ENCODE measurements at regions of chr15 and their contacts with region 1.

Region 1: GRCh38 chr15:73081321-73081958 is 29.2 kb downstream of the NEO1 start:
- DNase-seq: peak in 4 of 5 donors; percentile 40 to 51 (median 44)
- H3K4me3 ChIP-seq: no peak overlapping the region
- H3K4me3 Mint-ChIP-seq: no peak overlapping the region
- H3K27ac ChIP-seq: no peak overlapping the region
- H3K27ac Mint-ChIP-seq: no peak overlapping the region
- H3K4me1 ChIP-seq: no peaks in the 10 kb centered on the region
- H3K4me1 Mint-ChIP-seq: peaks cover 0 to 4% (median under 1%) of the 10 kb centered on the region in 4 donors
- H3K27me3 ChIP-seq: no peaks in the 10 kb centered on the region
- H3K27me3 Mint-ChIP-seq: no peaks in the 10 kb centered on the region

Region 2: DNA sequence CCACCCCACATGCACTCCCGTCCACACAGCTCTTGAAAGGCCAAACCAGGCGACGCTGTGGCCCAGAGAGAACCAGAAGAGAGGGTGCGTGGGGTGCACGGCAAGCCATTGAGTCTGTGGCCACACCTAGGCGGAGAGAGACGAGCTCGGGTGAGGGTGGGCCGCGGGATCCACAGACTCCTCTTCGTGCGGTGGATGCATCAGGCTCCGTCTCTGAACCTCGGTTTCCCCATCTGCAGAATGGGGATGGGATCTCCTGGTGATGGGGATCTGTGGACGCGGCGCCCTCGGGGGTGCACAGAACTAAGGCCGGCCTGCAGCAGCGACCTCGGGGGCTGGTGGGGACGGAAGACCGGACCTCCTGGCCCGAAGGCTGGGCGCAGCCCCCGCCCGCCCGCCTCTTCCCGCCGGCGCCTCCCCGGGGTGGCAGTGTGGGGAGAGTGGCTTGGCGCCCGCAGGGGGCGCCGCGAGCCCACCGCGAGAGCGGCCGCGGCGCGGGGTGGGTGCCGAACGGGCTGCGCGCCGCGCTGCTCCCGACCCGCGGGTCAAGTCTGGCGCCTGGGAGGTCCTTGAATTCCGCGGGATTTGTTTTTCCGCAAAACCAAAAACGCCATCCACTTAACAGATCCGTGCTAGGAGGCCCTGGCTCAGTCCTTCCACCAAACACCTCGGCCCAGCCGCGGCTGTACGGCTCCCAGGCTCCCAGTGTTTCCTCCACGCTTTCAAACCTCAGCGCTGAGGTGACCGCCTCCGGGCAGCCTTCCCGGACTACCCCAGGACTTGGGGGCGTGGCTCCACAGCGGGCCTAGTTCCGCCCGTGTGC is 284.7 kb before region 1 on chr15:
- CTCF ChIA-PET with region 1: interaction called, 24 read pairs
- POLR2A ChIA-PET with region 1: no interaction called
- intact Hi-C with region 1: loop called (anchors 1 kb)
- DNase-seq: peak in 4 of 5 donors; percentile 28 to 47 (median 36)
- H3K4me3 ChIP-seq: peak overlapping the region in 1 of 2 donors; percentile 57
- H3K4me3 Mint-ChIP-seq: peak overlapping the region; percentile 84 to 91 (median 87)
- H3K27ac ChIP-seq: no peak overlapping the region
- H3K27ac Mint-ChIP-seq: peak overlapping the region in 6 of 7 donors; percentile 43 to 87 (median 82)
- H3K4me1 ChIP-seq: peaks cover 4% of the 10 kb centered on the region
- H3K4me1 Mint-ChIP-seq: peaks cover 5 to 20% (median 7%) of the 10 kb centered on the region in 4 donors
- H3K27me3 ChIP-seq: no peaks in the 10 kb centered on the region
- H3K27me3 Mint-ChIP-seq: peaks cover 10 to 11% of the 10 kb centered on the region in 2 donors

Region 3: DNA sequence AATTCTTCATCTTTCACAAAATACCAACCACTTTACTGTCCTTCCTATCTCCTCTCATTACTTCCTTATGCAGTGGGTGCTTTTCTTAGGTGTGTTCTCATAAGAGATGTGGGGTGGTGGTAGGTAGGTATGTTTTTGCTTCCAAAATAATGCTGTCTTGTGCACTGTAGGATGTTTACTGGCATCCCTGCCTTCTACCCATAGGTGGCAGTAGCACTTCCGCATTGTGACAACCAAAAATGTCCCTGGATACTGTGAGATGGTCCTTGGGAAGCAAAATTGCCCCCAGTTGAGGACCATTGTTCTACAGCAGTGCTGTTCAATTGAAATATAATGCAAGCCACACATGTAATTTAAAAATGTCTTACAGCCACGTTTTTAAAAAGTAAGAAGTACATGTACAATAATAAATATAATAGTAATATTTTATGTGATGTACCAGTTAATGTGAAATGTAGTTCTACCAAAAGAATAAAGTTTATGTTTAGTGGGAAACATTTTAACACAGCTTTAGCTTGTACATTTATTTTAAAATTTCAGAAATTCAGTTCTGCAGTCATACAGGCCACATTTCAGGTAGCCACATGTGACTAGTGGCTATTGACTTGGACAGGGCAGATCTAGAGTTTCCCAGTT is 46.0 kb after region 1 on chr15:
- CTCF ChIA-PET with region 1: no interaction called
- POLR2A ChIA-PET with region 1: no interaction called
- intact Hi-C with region 1: no loop called
- DNase-seq: peak in 4 of 5 donors; percentile 8 to 36 (median 20)
- H3K4me3 ChIP-seq: no peak overlapping the region
- H3K4me3 Mint-ChIP-seq: no peak overlapping the region
- H3K27ac ChIP-seq: no peak overlapping the region
- H3K27ac Mint-ChIP-seq: peak overlapping the region in 1 of 7 donors; percentile 50
- H3K4me1 ChIP-seq: no peaks in the 10 kb centered on the region
- H3K4me1 Mint-ChIP-seq: peaks cover 0 to 2% (median under 1%) of the 10 kb centered on the region in 4 donors
- H3K27me3 ChIP-seq: no peaks in the 10 kb centered on the region
- H3K27me3 Mint-ChIP-seq: no peaks in the 10 kb centered on the region

Measured in CD4-positive, alpha-beta memory T cell (primary cell).